ENCODE measurements at regions of chr15 and their contacts with region 1.

Region 1: DNA sequence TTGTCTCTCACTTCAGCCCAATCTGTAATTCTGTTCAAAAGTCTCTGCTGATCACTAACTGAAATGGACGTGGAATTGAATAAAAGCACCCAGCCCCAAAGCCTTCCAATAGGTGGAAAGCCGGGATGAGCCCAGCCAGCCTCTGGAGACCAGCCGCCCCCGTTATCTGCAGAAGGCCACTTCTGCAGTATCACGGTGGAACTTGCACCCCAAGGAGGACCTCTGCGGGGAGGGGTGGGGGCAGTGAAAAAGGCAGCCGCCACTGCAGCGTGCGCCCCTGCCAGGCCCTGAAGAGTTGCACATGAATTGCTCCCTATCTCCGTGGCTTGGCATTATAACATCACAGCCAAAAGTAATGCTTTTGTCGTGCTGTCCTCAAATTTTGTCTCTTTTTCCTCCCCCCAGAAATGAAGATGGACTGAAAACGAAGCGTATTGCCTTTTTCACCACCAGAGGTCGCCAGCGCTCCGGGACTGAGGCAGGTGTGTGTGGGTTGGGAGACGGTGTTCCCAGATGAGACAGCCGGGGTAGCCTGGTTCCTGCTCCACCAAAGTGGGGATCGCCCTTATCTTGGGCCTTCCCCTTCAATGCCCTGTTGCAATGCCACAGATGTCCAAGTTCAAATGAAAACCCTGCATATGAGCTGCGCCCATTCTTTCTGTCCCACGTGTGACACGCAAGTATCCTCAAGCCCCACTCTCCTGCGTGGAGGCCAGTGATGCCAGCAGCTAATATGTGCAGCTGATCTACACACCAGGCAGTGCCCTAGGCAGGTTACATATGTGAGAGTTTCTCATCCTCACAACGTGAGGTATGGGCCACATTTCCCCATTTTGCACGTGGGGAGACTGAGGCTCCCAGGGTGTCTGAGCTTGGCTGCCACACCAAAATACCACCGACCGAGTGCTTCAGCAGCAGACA is 96.0 kb downstream of the LRRK1 start:
- DNase-seq: peak; percentile 73
- H3K4me3 Mint-ChIP-seq: no peak overlapping the region
- H3K27ac Mint-ChIP-seq: no peak overlapping the region
- H3K4me1 Mint-ChIP-seq: no peaks in the 10 kb centered on the region
- H3K27me3 Mint-ChIP-seq: no peaks in the 10 kb centered on the region
- CTCF ChIP-seq: peak; percentile 82

Region 2: DNA sequence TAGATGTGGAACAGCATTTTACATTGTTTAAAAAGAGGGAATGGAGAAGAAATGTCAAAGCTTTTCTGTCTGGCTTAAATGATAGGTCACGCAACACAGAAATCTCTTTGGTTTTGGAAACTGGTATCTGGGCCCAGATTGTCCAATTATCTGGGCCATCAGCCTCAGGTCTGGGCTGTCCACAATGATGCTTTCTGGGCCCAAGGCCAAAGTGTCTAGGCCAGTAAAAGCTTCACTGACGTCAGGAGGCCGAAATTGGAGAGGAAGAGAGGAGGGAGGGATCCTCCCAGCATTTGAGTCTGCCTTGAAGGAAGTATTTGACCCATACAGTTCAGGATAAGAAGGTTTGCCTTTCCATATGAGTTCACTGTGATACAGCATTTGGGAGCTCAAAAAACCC is 196.3 kb before region 1 on chr15:
- CTCF ChIA-PET with region 1: no interaction called
- POLR2A ChIA-PET with region 1: no interaction called
- intact Hi-C with region 1: no loop called
- DNase-seq: peak; percentile 59
- H3K4me3 Mint-ChIP-seq: no peak overlapping the region
- H3K27ac Mint-ChIP-seq: no peak overlapping the region
- H3K4me1 Mint-ChIP-seq: no peaks in the 10 kb centered on the region
- H3K27me3 Mint-ChIP-seq: no peaks in the 10 kb centered on the region
- CTCF ChIP-seq: no peak

Region 3: GRCh38 chr15:100842756-100843725 is 172.1 kb before region 1 on chr15:
- CTCF ChIA-PET with region 1: no interaction called
- POLR2A ChIA-PET with region 1: no interaction called
- intact Hi-C with region 1: no loop called
- DNase-seq: no peak
- H3K4me3 Mint-ChIP-seq: no peak overlapping the region
- H3K27ac Mint-ChIP-seq: no peak overlapping the region
- H3K4me1 Mint-ChIP-seq: no peaks in the 10 kb centered on the region
- H3K27me3 Mint-ChIP-seq: no peaks in the 10 kb centered on the region
- CTCF ChIP-seq: no peak

Region 4: DNA sequence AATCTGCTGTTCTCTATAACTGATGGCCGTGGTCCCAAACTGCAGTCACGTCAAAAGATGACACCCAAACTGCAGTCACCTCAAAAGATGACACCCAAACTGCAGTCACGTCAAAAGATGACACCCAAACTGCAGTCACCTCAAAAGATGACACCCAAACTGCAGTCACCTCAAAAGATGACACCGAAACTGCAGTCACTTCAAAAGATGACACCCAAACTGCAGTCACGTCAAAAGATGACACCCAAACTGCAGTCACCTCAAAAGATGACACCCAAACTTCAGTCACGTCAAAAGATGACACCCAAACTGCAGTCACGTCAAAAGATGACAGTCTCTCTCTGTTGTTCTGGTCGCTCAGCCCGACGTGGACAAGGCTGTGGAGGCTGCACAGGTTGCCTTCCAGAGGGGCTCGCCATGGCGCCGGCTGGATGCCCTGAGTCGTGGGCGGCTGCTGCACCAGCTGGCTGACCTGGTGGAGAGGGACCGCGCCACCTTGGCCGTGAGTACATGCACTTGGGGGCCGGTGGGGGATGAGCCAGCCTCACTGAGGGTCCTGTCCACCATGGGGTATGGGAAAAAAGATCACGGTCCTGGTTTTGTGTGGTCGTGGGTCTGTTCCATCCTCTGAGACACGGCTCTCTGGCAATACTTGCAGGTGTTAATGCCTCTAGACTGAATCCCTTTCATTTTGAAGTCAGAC is 127.8 kb before region 1 on chr15:
- CTCF ChIA-PET with region 1: no interaction called
- POLR2A ChIA-PET with region 1: no interaction called
- intact Hi-C with region 1: no loop called
- DNase-seq: no peak
- H3K4me3 Mint-ChIP-seq: no peak overlapping the region
- H3K27ac Mint-ChIP-seq: no peak overlapping the region
- H3K4me1 Mint-ChIP-seq: no peaks in the 10 kb centered on the region
- H3K27me3 Mint-ChIP-seq: no peaks in the 10 kb centered on the region
- CTCF ChIP-seq: no peak

Region 5: DNA sequence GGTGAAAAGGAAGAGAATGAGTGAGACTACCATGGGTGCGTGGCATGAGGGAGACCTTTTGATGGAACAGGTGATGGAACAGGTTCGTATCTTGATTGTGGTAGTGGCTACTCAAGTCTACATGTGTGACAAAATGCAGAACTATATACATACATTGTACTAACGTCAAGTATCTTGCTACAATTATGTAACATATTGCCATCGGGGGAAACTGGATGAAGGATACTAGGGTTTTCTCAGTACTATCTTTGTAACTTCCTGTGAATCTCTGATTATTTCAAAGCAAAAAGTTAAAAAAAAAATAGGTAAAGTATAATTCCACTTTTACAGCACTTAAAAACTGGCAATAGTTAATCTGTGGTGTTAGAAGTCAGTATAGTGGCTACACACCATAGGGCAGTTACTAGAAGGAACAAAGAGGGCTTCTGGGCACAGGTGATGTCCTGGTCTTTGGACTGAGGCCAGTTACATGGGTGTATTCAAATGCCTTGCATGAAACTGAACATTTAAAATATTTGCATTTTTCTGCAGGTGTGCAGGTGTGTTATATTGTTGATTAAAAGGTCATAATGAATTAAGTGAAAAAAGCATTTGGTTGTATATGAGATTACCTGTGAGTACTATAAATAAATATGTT is 34.7 kb before region 1 on chr15:
- CTCF ChIA-PET with region 1: no interaction called
- POLR2A ChIA-PET with region 1: no interaction called
- intact Hi-C with region 1: no loop called
- DNase-seq: no peak
- H3K4me3 Mint-ChIP-seq: no peak overlapping the region
- H3K27ac Mint-ChIP-seq: no peak overlapping the region
- H3K4me1 Mint-ChIP-seq: no peaks in the 10 kb centered on the region
- H3K27me3 Mint-ChIP-seq: no peaks in the 10 kb centered on the region
- CTCF ChIP-seq: no peak

Region 6: GRCh38 chr15:101088788-101089583 is 73.8 kb after region 1 on chr15:
- CTCF ChIA-PET with region 1: interaction called, 10 read pairs
- POLR2A ChIA-PET with region 1: no interaction called
- intact Hi-C with region 1: loop called (anchors 5 kb)
- DNase-seq: peak; percentile 61
- H3K4me3 Mint-ChIP-seq: no peak overlapping the region
- H3K27ac Mint-ChIP-seq: no peak overlapping the region
- H3K4me1 Mint-ChIP-seq: no peaks in the 10 kb centered on the region
- H3K27me3 Mint-ChIP-seq: no peaks in the 10 kb centered on the region
- CTCF ChIP-seq: peak; percentile 99

Region 7: DNA sequence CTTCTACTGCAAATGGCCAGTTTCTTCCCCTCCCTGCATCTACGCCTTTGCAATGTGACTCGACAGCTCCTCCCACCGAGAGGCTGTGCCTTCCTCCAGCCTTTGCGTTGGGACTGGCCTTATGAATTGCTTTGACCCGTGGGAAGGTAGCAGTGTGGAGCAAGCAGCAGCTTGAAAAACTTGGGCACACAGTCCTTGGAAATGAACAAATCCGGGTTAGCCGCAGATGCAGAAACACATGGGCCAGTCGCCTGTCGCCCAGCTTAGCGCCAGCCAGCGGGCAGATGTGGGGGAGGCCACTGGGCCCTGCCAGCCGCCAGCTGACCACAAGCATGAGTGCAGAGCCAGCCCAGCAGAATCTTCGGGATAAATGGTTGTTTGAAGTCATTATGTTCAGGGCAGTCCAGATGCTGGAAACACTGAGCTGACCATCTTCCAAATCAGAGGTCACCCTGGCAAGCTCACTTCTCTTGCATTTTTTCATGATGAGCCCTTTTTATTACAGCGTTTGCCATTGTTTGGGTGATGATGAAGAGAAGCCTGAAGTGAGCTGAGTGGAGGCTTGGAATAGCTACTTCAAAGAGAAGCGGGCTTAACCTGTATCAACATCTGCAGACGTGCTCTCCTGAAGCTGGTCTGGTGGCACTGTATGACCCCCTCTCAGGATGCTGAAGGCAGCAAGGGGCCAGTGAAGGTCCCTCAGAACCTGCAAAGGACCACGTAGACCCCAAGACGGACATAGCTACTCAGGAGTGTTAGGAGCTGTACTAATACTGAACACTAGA is 252.3 kb after region 1 on chr15:
- CTCF ChIA-PET with region 1: interaction called, 16 read pairs
- POLR2A ChIA-PET with region 1: no interaction called
- intact Hi-C with region 1: no loop called
- DNase-seq: peak; percentile 51
- H3K4me3 Mint-ChIP-seq: no peak overlapping the region
- H3K27ac Mint-ChIP-seq: no peak overlapping the region
- H3K4me1 Mint-ChIP-seq: no peaks in the 10 kb centered on the region
- H3K27me3 Mint-ChIP-seq: no peaks in the 10 kb centered on the region
- CTCF ChIP-seq: no peak